Heart right ventricle (tissue), 16 donors: ENCODE measurements at regions of chr11 and their contacts with region 1.

Region 1: DNA sequence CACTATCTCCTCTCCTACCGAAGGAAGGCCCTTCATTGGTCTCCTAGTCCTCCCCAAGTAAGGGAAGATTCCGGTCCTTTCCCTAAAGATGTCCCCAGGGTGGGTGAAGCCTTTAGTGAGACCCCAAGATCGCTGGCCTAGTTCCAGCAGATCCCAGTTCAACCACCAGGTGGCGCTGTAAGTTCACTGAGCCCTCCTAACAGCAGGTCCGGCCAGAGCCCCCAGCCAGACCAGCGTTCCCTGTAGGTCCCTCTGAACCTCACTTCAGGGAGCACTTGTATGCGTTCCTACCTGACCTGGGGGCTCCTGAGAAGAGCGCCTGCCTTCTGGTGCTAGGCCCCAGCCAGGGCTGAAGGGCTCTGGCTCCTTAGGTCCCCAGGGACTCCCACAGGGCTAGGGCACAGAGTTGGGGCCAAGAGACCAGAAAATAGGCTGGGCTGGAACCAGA is 38.1 kb downstream of the LMO1 start:
- DNase-seq: peak; percentile 69 to 72
- ATAC-seq: peak; percentile 36 to 77 (median 58)
- H3K4me3 ChIP-seq: no peak overlapping the region
- H3K27ac ChIP-seq: no peak overlapping the region
- H3K4me1 ChIP-seq: peaks cover 0 to 16% (median 6%) of the 10 kb centered on the region in 9 donors
- H3K27me3 ChIP-seq: peaks cover 0 to 8% (median 0%) of the 10 kb centered on the region in 7 donors
- CTCF ChIP-seq: peak; percentile 87 to 98 (median 95)

Region 2: GRCh38 chr11:8263769-8264410 is 38.3 kb after region 1 on chr11 and contains the start of gene LMO1:
- intact Hi-C with region 1: loop called (anchors 1 to 5 kb)
- DNase-seq: peak; percentile 82 to 84
- ATAC-seq: peak; percentile 56 to 89 (median 82)
- H3K4me3 ChIP-seq: peak within 1 kb of the TSS; percentile 25 to 72 (median 53)
- H3K27ac ChIP-seq: peak within 1 kb of the TSS in 3 of 10 donors; percentile 25 to 71 (median 35)
- H3K4me1 ChIP-seq: peaks cover 1 to 37% (median 23%) of the 10 kb centered on the region in 9 donors
- H3K27me3 ChIP-seq: peaks cover 13 to 86% (median 70%) of the 10 kb centered on the region in 7 donors
- CTCF ChIP-seq: peak; percentile 79 to 93 (median 88)
- total RNA-seq, gene LMO1: 0.61 to 6.6 (median 2.4) TPM

Region 3: DNA sequence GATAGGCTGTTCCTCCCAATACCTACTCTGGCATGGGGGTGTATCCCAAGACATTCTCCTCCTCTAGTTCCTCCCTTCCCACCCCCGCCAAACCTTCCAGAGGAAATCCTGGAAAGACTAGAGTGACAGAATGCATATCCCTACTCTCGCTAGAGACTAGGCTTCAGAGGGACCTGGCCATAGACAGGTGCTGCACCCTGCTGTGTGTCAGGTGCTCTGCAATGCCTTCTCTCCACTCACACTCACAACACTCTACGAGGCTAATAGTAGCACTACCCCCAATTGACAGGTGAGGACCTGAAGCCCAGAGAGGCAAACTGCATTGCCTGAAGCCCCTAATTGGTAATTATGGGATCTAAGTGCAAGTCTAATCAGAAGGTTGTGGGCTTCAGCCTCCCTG is 84.2 kb after region 1 on chr11:
- intact Hi-C with region 1: loop called in 6 of 10 experiments (anchors 5 to 10 kb)
- DNase-seq: no peak
- ATAC-seq: peak in 6 of 8 donors; percentile 46 to 79 (median 53)
- H3K4me3 ChIP-seq: no peak overlapping the region
- H3K27ac ChIP-seq: no peak overlapping the region
- H3K4me1 ChIP-seq: no peaks in the 10 kb centered on the region
- H3K27me3 ChIP-seq: peaks cover 0 to 3% (median 0%) of the 10 kb centered on the region in 7 donors
- CTCF ChIP-seq: peak in 7 of 9 donors; percentile 21 to 49 (median 37)

Region 4: DNA sequence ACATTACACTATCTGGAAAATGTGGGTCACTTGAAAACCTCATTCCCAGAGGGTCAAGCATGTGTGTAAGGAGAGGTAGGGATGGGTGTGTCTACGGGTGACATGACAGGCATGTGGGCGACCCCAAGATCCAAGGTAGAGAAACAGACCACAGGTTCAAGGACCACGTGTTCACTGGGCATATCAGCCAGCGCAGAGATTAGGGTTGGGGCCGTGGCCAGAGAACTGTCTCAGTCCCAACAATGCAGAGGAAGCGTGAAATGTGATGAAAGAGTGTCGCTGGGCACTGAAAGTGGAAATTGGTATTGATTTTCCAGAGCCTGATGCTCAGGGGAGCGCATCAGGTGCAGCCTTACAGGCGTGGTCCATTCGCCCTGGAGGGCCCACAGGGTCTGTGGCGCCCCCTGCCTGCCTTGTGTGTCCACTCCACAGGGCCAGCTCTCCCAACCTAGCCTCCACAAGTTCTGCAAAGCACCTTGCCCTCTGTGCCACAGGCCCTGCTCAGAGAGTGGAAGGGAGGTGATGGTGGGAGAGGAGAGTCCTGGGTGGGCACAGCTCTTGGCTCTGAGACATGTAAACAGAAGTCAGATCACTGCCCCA is 92.8 kb after region 1 on chr11:
- intact Hi-C with region 1: loop called in 5 of 10 experiments (anchors 5 to 10 kb)
- DNase-seq: no peak
- ATAC-seq: no peak
- H3K4me3 ChIP-seq: no peak overlapping the region
- H3K27ac ChIP-seq: no peak overlapping the region
- H3K4me1 ChIP-seq: no peaks in the 10 kb centered on the region
- H3K27me3 ChIP-seq: peaks cover 0 to 6% (median 0%) of the 10 kb centered on the region in 7 donors
- CTCF ChIP-seq: peak in 7 of 9 donors; percentile 29 to 48 (median 38)

Region 5: GRCh38 chr11:8328848-8329330 is 103.3 kb after region 1 on chr11:
- intact Hi-C with region 1: loop called in 1 of 10 experiments (anchors 5 kb)
- DNase-seq: peak; percentile 70 to 72
- ATAC-seq: peak; percentile 74 to 94 (median 84)
- H3K4me3 ChIP-seq: peak overlapping the region in 9 of 10 donors; percentile 15 to 42 (median 37)
- H3K27ac ChIP-seq: peak overlapping the region in 5 of 10 donors; percentile 14 to 44 (median 27)
- H3K4me1 ChIP-seq: peaks cover 0 to 26% (median 7%) of the 10 kb centered on the region in 9 donors
- H3K27me3 ChIP-seq: peaks cover 0 to 9% (median 0%) of the 10 kb centered on the region in 7 donors
- CTCF ChIP-seq: peak; percentile 25 to 79 (median 74)

Region 6: GRCh38 chr11:8566613-8567210 is 341.1 kb after region 1 on chr11:
- intact Hi-C with region 1: loop called (anchors 1 to 5 kb)
- DNase-seq: no peak
- ATAC-seq: peak in 4 of 8 donors; percentile 8 to 44 (median 33)
- H3K4me3 ChIP-seq: no peak overlapping the region
- H3K27ac ChIP-seq: no peak overlapping the region
- H3K4me1 ChIP-seq: no peaks in the 10 kb centered on the region
- H3K27me3 ChIP-seq: peaks cover 0 to 7% (median 0%) of the 10 kb centered on the region in 7 donors
- CTCF ChIP-seq: peak; percentile 51 to 86 (median 70)